ENCODE measurements at regions of chr22 and their contacts with region 1.

Region 1: DNA sequence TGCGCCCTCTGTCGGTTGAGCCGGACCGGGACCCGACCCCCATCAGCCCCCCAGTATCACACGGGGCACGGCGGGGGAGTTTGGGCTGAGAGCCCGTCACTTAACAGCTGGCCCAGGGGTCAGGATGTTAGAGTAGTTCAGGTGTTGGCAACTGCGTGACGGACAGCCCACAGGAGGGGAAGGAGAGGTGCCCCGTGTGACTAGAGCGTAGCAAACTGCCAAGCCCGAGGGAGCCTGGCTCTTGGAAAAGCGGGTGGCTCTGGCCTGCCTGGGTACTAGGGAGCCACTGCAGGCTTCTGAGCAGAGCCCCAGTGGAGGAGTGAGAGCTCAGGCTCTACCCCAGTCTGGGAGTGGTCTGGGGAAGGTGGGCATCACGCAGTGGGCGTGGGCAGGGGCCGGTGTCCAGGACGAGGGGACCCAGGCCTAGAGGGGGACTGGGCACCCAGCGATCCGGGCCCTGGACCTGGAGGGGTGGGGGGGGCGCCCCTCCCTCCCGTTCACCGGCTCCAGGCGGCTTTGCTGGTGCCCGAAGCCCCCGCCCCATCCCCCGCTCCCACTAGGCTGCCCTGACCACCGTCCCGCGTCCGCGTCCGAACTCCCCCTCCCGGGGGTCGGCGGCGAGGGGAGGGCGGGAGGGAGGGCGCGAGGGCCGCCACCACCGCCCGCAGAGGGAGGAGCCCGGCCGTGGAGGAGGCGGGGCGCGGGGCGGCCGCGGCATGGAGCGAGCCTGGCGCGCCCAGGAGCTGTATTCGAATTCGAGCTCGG is 24.4 kb downstream of the SHANK3 start:
- DNase-seq: peak in 1 of 2 experiments; percentile 84
- H3K4me3 ChIP-seq: peak overlapping the region; percentile 11 to 58 (median 16); a peak in 6 of 8 replicates
- H3K27ac ChIP-seq: no peak overlapping the region
- H3K4me1 ChIP-seq: peaks cover 0 to 10% (median 0%) of the 10 kb centered on the region in 4 experiments; a peak in 4 of 7 replicates
- H3K27me3 ChIP-seq: peaks cover 6 to 24% (median 14%) of the 10 kb centered on the region in 4 experiments; a peak in 6 of 7 replicates
- CTCF ChIP-seq: peak; percentile 71 to 77 (median 76)
- EP300 ChIP-seq: no peak
- POLR2A ChIP-seq: no peak
- RAD21 ChIP-seq: peak in 1 of 2 experiments; percentile 70; a peak in 3 of 4 replicates

Region 2: DNA sequence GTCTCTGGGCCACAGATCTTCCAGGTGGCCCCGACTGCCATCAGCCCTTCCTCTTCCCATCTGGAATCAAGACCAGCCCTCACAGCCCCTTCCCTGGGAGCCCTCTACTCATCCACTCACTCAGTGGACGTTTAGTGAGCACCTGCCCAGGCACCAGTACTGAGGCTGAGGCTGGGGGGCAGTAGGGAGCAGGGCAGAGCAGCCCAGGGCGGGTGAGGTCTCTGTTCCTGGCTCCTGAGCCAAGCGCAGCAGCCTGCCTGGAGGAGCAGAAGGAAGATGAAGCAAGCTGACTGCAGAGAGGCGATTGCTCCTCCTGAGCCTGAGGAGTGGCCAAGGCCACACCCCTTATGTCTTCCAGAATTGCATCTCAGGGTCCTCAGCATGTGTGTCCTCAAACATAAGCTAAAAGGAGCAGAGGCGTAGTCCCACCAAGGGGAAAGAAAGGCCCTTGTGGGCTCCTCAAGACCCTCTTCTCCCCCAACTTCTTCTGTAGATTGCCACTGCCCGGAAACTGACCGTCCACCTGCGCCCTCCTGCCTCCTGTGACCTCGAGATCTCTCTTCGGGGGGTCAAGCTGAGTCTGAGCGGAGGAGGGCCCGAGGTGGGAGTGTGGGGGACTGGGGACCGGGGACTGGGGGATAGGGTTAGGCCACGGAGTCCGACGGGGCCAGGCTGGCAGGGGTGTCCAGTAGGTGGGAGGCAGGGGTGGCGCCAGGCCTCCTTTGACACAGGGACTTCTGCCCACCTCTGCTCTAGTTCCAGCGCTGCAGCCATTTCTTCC is 90.6 kb before region 1 on chr22:
- CTCF ChIA-PET with region 1: interaction called, 16 read pairs
- POLR2A ChIA-PET with region 1: no interaction called
- DNase-seq: peak in 1 of 2 experiments; percentile 46
- H3K4me3 ChIP-seq: no peak overlapping the region
- H3K27ac ChIP-seq: no peak overlapping the region
- H3K4me1 ChIP-seq: peaks cover 0 to 12% (median under 1%) of the 10 kb centered on the region in 4 experiments; a peak in 4 of 7 replicates
- H3K27me3 ChIP-seq: peaks cover 38 to 54% (median 48%) of the 10 kb centered on the region in 4 experiments; a peak in 6 of 7 replicates
- CTCF ChIP-seq: peak; percentile 41 to 48 (median 43)
- EP300 ChIP-seq: no peak
- POLR2A ChIP-seq: no peak
- RAD21 ChIP-seq: peak; percentile 14 to 40; a peak in 2 of 4 replicates

Region 3: GRCh38 chr22:50674606-50675549 is 22.1 kb before region 1 on chr22:
- CTCF ChIA-PET with region 1: interaction called, 27 read pairs
- POLR2A ChIA-PET with region 1: interaction called, 3 read pairs
- DNase-seq: peak; percentile 57 to 90
- H3K4me3 ChIP-seq: peak overlapping the region; percentile 51 to 70 (median 62)
- H3K27ac ChIP-seq: no peak overlapping the region; the same call in 1 of the 2 replicates
- H3K4me1 ChIP-seq: peaks cover 0 to 16% (median 9%) of the 10 kb centered on the region in 4 experiments; a peak in 6 of 7 replicates
- H3K27me3 ChIP-seq: peaks cover 3 to 21% (median 16%) of the 10 kb centered on the region in 4 experiments
- CTCF ChIP-seq: no peak
- EP300 ChIP-seq: no peak
- POLR2A ChIP-seq: no peak
- RAD21 ChIP-seq: peak in 1 of 2 experiments; percentile 29; a peak in 2 of 4 replicates

Measured in H1 (cell line).